GM12878 (cell line): ENCODE measurements at regions of chr6 and their contacts with region 1.

Region 1: DNA sequence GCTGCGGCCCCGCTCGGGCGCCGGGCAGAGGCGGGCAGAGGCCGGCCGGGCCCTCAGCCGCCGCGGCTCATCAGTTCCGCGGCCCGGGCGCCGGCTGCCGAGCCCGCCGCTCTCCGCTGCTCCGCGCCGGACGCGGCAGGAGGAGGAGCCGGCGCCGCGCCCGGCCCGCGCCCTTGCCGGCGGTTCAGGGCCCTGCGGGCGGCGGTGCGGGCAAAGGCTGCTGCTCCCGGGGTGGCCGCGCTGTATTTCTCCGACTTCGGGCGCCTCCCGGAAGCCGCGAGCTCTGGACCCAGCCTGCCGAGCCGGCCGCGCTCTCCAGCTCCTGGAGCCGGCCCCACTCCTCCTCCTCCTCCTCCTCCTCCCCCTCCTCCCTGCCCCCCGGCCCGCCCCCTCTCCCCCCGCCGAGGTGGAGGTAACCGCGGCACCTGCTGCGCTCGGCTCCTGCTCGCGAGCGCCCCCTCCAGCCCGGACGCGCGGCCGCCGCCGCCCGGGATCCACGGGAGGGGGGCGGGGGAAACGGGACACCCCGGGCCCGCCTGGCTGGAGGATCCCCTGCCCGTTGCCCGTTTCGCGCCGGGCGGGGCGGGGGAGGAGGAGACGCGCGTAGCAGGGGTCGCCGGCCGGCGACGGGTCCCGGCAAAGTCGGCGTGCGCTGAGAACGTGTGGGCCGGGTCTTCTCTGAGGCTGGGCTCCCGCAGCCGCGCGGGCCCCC is at the start of gene SLC22A23:
- DNase-seq: no peak
- ATAC-seq: peak; percentile 72
- H3K4me3 ChIP-seq: peak within 1 kb of the TSS; percentile 65; the same call in 1 of the 2 replicates
- H3K27ac ChIP-seq: no peak within 1 kb of the TSS
- H3K4me1 ChIP-seq: no peaks in the 10 kb centered on the region
- H3K27me3 ChIP-seq: peaks cover 7 to 11% of the 10 kb centered on the region in 2 experiments; a peak in 3 of 4 replicates
- CTCF ChIP-seq: peak; percentile 37 to 65 (median 64); a peak in 5 of 6 replicates
- EP300 ChIP-seq: no peak
- POLR2A ChIP-seq: no peak
- RAD21 ChIP-seq: peak; percentile 50
- polyA plus RNA-seq, gene SLC22A23: 0.20 to 0.24 TPM

Region 2: DNA sequence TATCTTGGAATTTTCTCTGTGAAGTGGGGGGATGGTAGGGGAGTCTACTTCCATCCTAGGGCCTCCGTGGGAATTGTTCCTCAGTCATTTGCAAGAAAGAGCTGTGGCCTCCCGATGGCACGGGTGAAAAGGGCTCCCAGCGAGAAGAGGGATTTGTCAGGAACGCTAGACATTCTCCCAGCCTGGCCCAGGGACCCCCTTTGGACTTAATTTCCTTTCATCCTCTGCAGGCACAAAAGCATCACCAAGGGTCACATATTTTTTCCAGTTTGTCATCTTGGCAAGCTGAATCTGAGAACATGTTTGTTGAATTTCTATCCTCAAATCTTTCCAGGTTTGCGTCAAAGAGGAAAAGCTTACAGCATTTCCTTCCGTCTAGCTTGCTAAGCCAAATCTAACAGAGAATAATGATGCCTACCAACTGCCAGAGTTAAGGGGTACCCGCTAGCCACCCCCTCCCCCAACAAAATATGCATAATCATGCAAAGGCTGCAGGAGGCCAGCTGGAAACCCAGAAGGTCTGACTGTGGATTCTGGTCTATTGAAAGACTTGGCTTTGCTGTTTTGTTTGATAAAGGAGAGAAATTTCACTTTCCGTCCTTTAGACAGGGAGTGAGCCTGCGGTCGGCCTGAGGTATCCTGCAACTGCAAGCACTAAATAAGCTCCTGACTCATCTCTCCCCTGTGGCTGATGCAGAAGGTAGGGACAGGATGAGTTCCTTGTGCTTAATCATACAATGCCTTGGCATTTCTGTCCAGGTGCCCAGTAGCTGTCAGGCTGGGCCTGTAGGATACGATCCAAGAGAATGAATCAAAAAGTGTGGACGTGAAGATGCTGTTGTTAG is 175.1 kb before region 1 on chr6:
- CTCF ChIA-PET with region 1: interaction called, 9 read pairs
- POLR2A ChIA-PET with region 1: no interaction called
- RAD21 ChIA-PET with region 1: interaction called, 7 read pairs
- SMC1A ChIA-PET with region 1: interaction called, 20 read pairs
- in situ Hi-C with region 1: no loop called
- intact Hi-C with region 1: loop called (anchors 2 kb)
- DNase-seq: no peak
- ATAC-seq: no peak
- H3K4me3 ChIP-seq: no peak overlapping the region
- H3K27ac ChIP-seq: no peak overlapping the region
- H3K4me1 ChIP-seq: no peaks in the 10 kb centered on the region
- H3K27me3 ChIP-seq: no peaks in the 10 kb centered on the region
- CTCF ChIP-seq: no peak
- EP300 ChIP-seq: no peak
- POLR2A ChIP-seq: no peak
- RAD21 ChIP-seq: no peak

Region 3: GRCh38 chr6:3383525-3383924 is 73.4 kb before region 1 on chr6:
- CTCF ChIA-PET with region 1: interaction called, 11 read pairs
- POLR2A ChIA-PET with region 1: interaction called, 3 read pairs
- RAD21 ChIA-PET with region 1: interaction called, 17 read pairs
- SMC1A ChIA-PET with region 1: interaction called, 4 read pairs
- in situ Hi-C with region 1: no loop called
- intact Hi-C with region 1: no loop called
- DNase-seq: peak; percentile 75
- ATAC-seq: peak; percentile 69
- H3K4me3 ChIP-seq: no peak overlapping the region
- H3K27ac ChIP-seq: peak overlapping the region; percentile 50
- H3K4me1 ChIP-seq: peaks cover 58% of the 10 kb centered on the region
- H3K27me3 ChIP-seq: no peaks in the 10 kb centered on the region
- CTCF ChIP-seq: no peak
- EP300 ChIP-seq: peak; percentile 75 to 87; a peak in 3 of 4 replicates
- POLR2A ChIP-seq: no peak
- RAD21 ChIP-seq: no peak

Region 4: GRCh38 chr6:3419624-3420272 is 37.2 kb before region 1 on chr6:
- CTCF ChIA-PET with region 1: interaction called, 17 read pairs
- POLR2A ChIA-PET with region 1: interaction called, 3 read pairs
- RAD21 ChIA-PET with region 1: interaction called, 22 read pairs
- SMC1A ChIA-PET with region 1: interaction called, 46 read pairs
- in situ Hi-C with region 1: no loop called
- intact Hi-C with region 1: no loop called
- DNase-seq: no peak
- ATAC-seq: no peak
- H3K4me3 ChIP-seq: no peak overlapping the region
- H3K27ac ChIP-seq: no peak overlapping the region
- H3K4me1 ChIP-seq: peaks cover 4% of the 10 kb centered on the region
- H3K27me3 ChIP-seq: no peaks in the 10 kb centered on the region
- CTCF ChIP-seq: no peak
- EP300 ChIP-seq: no peak
- POLR2A ChIP-seq: no peak
- RAD21 ChIP-seq: no peak

Region 5: DNA sequence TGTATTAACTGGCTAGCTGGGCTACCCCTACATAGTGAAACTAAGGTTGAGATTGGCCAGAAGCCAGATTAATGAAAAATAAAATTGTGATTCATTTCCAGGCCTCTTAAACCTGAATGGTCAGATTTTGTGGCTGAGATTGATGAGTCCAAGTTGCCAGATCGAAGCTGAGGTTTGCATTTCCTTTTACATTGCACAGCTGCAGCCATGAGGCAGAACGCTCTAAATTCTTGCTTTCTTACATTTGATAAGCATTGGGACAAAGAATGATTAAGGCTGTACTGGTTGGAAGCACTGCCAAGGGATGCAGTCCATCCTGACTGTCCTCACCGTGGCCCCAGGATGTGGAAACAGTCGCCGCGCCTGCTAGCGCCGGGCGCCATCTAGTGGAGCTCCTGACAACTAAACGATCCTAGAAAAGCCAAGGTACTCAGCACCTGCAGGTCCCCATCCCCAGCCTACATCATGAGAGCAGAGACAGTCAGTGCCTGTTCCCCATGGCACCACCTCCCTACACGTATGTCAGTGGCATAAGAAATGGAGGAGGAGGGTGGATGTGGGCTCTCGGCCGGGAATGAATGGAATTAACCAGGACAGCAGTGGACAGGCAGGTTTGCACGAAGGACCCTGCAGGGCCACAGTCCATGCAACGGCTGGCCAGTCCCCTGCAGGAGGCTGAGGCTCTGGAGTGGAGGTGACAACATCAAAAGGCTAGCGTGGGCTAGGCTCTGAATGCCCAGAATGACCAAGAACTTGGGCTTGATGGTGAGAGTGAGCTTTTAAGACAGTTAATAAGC is 275.6 kb after region 1 on chr6:
- CTCF ChIA-PET with region 1: interaction called, 5 read pairs
- POLR2A ChIA-PET with region 1: interaction called, 3 read pairs
- RAD21 ChIA-PET with region 1: interaction called, 11 read pairs
- SMC1A ChIA-PET with region 1: interaction called, 6 read pairs
- in situ Hi-C with region 1: no loop called
- intact Hi-C with region 1: loop called (anchors 5 kb)
- DNase-seq: no peak
- ATAC-seq: peak; percentile 96
- H3K4me3 ChIP-seq: no peak overlapping the region
- H3K27ac ChIP-seq: no peak overlapping the region
- H3K4me1 ChIP-seq: no peaks in the 10 kb centered on the region
- H3K27me3 ChIP-seq: no peaks in the 10 kb centered on the region
- CTCF ChIP-seq: peak; percentile 91 to 95 (median 91)
- EP300 ChIP-seq: no peak
- POLR2A ChIP-seq: no peak
- RAD21 ChIP-seq: peak; percentile 92

Region 6: GRCh38 chr6:3766214-3766613 is 309.3 kb after region 1 on chr6:
- CTCF ChIA-PET with region 1: no interaction called
- POLR2A ChIA-PET with region 1: no interaction called
- RAD21 ChIA-PET with region 1: no interaction called
- SMC1A ChIA-PET with region 1: no interaction called
- in situ Hi-C with region 1: no loop called
- intact Hi-C with region 1: no loop called
- DNase-seq: no peak
- ATAC-seq: no peak
- H3K4me3 ChIP-seq: no peak overlapping the region
- H3K27ac ChIP-seq: no peak overlapping the region
- H3K4me1 ChIP-seq: no peaks in the 10 kb centered on the region
- H3K27me3 ChIP-seq: no peaks in the 10 kb centered on the region; a peak in 1 of 4 replicates
- CTCF ChIP-seq: no peak
- EP300 ChIP-seq: no peak
- POLR2A ChIP-seq: no peak
- RAD21 ChIP-seq: no peak